OCI-LY7 (cell line): ENCODE measurements at regions of chr1 and their contacts with region 1.

Region 1: GRCh38 chr1:78132174-78132947 is 86.6 kb downstream of the GIPC2 start:
- DNase-seq: no peak
- H3K4me3 ChIP-seq: no peak overlapping the region
- H3K27ac ChIP-seq: no peak overlapping the region
- H3K4me1 ChIP-seq: no peaks in the 10 kb centered on the region
- CTCF ChIP-seq: no peak

Region 2: GRCh38 chr1:77524038-77524437 is 608.3 kb before region 1 on chr1:
- CTCF ChIA-PET with region 1: no interaction called
- POLR2A ChIA-PET with region 1: no interaction called
- intact Hi-C with region 1: no loop called
- DNase-seq: no peak
- H3K4me3 ChIP-seq: no peak overlapping the region
- H3K27ac ChIP-seq: no peak overlapping the region
- H3K4me1 ChIP-seq: no peaks in the 10 kb centered on the region
- CTCF ChIP-seq: no peak

Region 3: GRCh38 chr1:78070758-78071157 is 61.6 kb before region 1 on chr1:
- CTCF ChIA-PET with region 1: no interaction called
- POLR2A ChIA-PET with region 1: no interaction called
- intact Hi-C with region 1: no loop called
- DNase-seq: no peak
- H3K4me3 ChIP-seq: no peak overlapping the region
- H3K27ac ChIP-seq: no peak overlapping the region
- H3K4me1 ChIP-seq: no peaks in the 10 kb centered on the region
- CTCF ChIP-seq: no peak

Region 4: GRCh38 chr1:78114034-78114956 is 18.1 kb before region 1 on chr1:
- CTCF ChIA-PET with region 1: no interaction called
- POLR2A ChIA-PET with region 1: no interaction called
- intact Hi-C with region 1: no loop called
- DNase-seq: peak; percentile 81
- H3K4me3 ChIP-seq: no peak overlapping the region
- H3K27ac ChIP-seq: no peak overlapping the region
- H3K4me1 ChIP-seq: no peaks in the 10 kb centered on the region
- CTCF ChIP-seq: peak; percentile 100

Region 5: GRCh38 chr1:78145105-78145580 is 12.8 kb after region 1 on chr1:
- CTCF ChIA-PET with region 1: interaction called, 7 read pairs
- POLR2A ChIA-PET with region 1: interaction called, 10 read pairs
- intact Hi-C with region 1: no loop called
- DNase-seq: peak; percentile 48
- H3K4me3 ChIP-seq: no peak overlapping the region
- H3K27ac ChIP-seq: no peak overlapping the region
- H3K4me1 ChIP-seq: no peaks in the 10 kb centered on the region
- CTCF ChIP-seq: peak; percentile 96

Region 6: DNA sequence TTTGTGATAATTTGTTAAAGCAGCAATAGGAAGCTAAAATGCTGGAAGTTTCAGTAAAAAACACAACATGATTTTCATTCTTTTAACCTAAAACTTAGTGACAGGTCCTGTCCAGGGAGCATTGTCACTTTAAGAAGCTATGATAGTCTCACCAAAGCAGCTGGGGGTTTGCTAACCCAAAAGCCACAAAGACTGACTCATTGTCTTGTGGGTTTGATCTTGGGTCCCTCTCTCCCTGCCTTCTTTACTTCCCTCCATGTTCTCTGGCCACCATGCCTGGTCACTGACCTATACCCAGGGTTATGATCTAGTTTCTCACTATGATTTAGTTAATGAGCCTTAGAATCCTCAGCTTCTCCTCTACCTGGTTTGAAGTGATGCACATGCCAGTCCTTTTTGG is 144.9 kb after region 1 on chr1:
- CTCF ChIA-PET with region 1: no interaction called
- POLR2A ChIA-PET with region 1: no interaction called
- intact Hi-C with region 1: no loop called
- DNase-seq: no peak
- H3K4me3 ChIP-seq: no peak overlapping the region
- H3K27ac ChIP-seq: no peak overlapping the region
- H3K4me1 ChIP-seq: no peaks in the 10 kb centered on the region
- CTCF ChIP-seq: no peak

Region 7: GRCh38 chr1:78607334-78607927 is 475.1 kb after region 1 on chr1:
- CTCF ChIA-PET with region 1: no interaction called
- POLR2A ChIA-PET with region 1: no interaction called
- intact Hi-C with region 1: loop called (anchors 5 kb)
- DNase-seq: peak; percentile 3
- H3K4me3 ChIP-seq: no peak overlapping the region
- H3K27ac ChIP-seq: no peak overlapping the region
- H3K4me1 ChIP-seq: no peaks in the 10 kb centered on the region
- CTCF ChIP-seq: peak; percentile 76

Region 8: DNA sequence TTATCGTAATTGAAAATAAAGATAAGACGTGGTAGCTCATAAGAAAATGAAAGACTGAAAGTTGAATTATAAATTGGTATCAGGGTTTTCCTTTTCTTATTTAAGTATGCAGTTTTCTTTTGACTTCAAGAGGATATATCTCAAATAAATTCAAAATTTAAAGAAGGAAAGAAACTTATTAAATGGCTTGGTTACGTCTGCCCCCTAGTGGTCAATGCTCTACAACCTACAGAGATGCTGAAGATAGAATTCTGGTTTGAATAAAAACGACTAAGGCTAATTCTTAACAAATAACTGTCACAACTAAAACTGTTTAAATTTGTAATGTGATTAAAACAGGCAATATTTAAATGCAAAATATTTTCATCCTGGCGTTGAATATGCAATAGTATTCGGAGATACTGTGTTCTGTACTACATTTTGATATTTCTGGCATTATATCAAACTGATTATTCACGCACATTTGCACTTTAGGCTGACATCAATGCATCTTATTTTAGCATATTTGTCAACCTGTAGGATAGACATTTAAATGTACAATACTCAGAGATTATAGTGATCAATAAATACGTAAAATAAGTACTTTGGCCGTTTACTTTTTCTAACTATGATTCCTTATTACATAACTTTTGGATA is 544.1 kb after region 1 on chr1:
- CTCF ChIA-PET with region 1: no interaction called
- POLR2A ChIA-PET with region 1: no interaction called
- intact Hi-C with region 1: loop called (anchors 5 kb)
- DNase-seq: peak; percentile 61
- H3K4me3 ChIP-seq: no peak overlapping the region
- H3K27ac ChIP-seq: no peak overlapping the region
- H3K4me1 ChIP-seq: no peaks in the 10 kb centered on the region
- CTCF ChIP-seq: peak; percentile 97